CD8-positive, alpha-beta T cell (primary cell): ENCODE measurements at regions of chr16 and their contacts with region 1.

Region 1: DNA sequence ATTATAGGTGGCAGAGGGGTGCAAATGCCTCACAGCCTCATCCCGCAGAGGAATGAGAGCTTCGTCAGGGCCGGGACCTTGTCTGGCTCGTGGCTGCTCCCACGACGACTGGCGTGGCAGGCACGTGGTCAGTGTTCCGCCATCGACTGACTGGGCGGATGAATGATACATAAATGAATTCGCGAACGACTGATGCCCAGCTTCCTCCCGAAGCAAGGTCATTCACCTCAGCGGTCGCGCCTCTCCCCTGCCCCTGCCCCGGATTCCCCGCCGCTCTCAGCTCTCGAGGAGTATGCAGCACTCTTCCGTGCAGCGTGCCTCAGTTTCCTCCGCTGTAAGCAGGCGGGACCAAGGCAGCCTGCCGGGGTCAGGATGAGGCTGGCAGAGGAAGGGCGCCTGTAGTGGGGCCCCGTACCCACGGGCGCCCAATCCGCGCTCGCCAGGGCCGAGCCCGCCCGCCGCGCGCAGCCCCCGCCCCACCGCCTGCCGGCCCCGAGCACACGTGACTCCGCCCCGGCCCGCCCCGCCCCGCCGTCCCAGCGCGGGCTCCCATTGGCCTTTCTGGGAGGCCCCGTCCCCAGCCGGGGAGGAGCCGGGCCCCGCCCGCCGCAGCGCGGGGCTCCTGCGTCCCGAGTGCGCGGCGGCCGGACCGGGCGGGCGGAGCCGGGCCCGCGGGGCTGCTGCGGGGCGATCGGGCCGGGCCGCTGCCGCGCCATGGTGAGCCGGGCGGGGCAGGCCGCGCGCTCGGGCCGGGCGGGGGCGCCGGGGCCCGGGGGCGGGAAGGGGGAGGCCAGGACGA is at the start of gene SNN:
- DNase-seq: peak; percentile 69 to 91 (median 83)
- ATAC-seq: peak; percentile 81
- H3K4me3 ChIP-seq: peak within 1 kb of the TSS; percentile 51 to 59
- H3K4me3 Mint-ChIP-seq: peak within 1 kb of the TSS; percentile 85
- H3K27ac ChIP-seq: peak within 1 kb of the TSS; percentile 62 to 70
- H3K27ac Mint-ChIP-seq: peak within 1 kb of the TSS; percentile 97
- H3K4me1 ChIP-seq: peaks cover 86% of the 10 kb centered on the region
- H3K4me1 Mint-ChIP-seq: peaks cover 78% of the 10 kb centered on the region
- H3K27me3 ChIP-seq: no peaks in the 10 kb centered on the region
- H3K27me3 Mint-ChIP-seq: no peaks in the 10 kb centered on the region
- CTCF ChIP-seq: no peak
- total RNA-seq, gene SNN: 105 to 107 TPM

Region 2: GRCh38 chr16:11484691-11485258 is 183.2 kb before region 1 on chr16:
- CTCF ChIA-PET with region 1: no interaction called
- POLR2A ChIA-PET with region 1: no interaction called
- intact Hi-C with region 1: no loop called
- DNase-seq: no peak
- ATAC-seq: no peak
- H3K4me3 ChIP-seq: no peak overlapping the region
- H3K4me3 Mint-ChIP-seq: no peak overlapping the region
- H3K27ac ChIP-seq: no peak overlapping the region
- H3K27ac Mint-ChIP-seq: no peak overlapping the region
- H3K4me1 ChIP-seq: no peaks in the 10 kb centered on the region
- H3K4me1 Mint-ChIP-seq: no peaks in the 10 kb centered on the region
- H3K27me3 ChIP-seq: no peaks in the 10 kb centered on the region
- H3K27me3 Mint-ChIP-seq: no peaks in the 10 kb centered on the region
- CTCF ChIP-seq: no peak

Region 3: DNA sequence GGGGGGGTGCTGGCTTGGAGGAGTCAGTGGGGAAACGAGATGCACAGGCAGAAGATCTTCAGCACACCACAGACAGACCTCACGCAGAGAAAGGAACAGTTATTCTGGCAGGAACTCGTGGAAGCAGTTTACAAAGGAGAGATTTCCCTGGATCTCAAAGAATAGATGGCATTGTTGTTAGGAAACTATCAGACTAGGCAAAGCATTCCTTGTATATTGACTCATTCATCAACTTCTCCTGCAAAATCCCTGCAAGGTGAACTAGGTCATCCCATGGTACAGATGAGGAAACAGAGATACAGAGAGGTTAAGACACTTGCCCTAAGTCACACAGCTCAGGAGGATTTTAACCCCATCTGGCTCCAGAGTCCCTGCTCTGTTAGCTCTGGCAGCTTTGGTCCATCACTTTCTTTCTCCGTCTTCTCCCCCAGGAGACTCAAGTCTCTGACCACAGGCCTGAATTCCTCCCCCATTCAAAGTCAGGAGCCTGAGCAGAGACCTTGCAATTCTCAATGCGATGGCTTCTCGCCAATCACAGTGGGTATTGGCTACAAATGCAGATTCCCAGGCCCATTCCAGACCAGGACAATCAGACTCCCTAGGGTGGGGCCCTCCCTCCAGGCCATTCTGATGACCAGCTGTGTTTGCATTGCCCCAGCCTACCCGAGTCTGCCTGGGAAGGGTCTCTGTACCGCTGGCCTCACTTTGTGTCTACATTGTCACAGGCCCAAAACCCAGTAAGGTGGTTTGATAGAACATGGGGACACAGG is 137.7 kb before region 1 on chr16:
- CTCF ChIA-PET with region 1: interaction called, 25 read pairs
- POLR2A ChIA-PET with region 1: no interaction called
- intact Hi-C with region 1: no loop called
- DNase-seq: no peak
- ATAC-seq: no peak
- H3K4me3 ChIP-seq: no peak overlapping the region
- H3K4me3 Mint-ChIP-seq: no peak overlapping the region
- H3K27ac ChIP-seq: no peak overlapping the region
- H3K27ac Mint-ChIP-seq: no peak overlapping the region
- H3K4me1 ChIP-seq: no peaks in the 10 kb centered on the region
- H3K4me1 Mint-ChIP-seq: peaks cover 3% of the 10 kb centered on the region
- H3K27me3 ChIP-seq: no peaks in the 10 kb centered on the region
- H3K27me3 Mint-ChIP-seq: no peaks in the 10 kb centered on the region
- CTCF ChIP-seq: no peak

Region 4: GRCh38 chr16:11619327-11619851 is 48.6 kb before region 1 on chr16:
- CTCF ChIA-PET with region 1: no interaction called
- POLR2A ChIA-PET with region 1: interaction called, 5 read pairs
- intact Hi-C with region 1: loop called in 1 of 2 experiments (anchors 5 kb)
- DNase-seq: peak in 7 of 9 experiments; percentile 28 to 75 (median 48)
- ATAC-seq: peak; percentile 25
- H3K4me3 ChIP-seq: no peak overlapping the region
- H3K4me3 Mint-ChIP-seq: peak overlapping the region; percentile 58
- H3K27ac ChIP-seq: peak overlapping the region; percentile 40 to 86
- H3K27ac Mint-ChIP-seq: peak overlapping the region; percentile 98
- H3K4me1 ChIP-seq: peaks cover 77% of the 10 kb centered on the region
- H3K4me1 Mint-ChIP-seq: peaks cover 70% of the 10 kb centered on the region
- H3K27me3 ChIP-seq: no peaks in the 10 kb centered on the region
- H3K27me3 Mint-ChIP-seq: no peaks in the 10 kb centered on the region
- CTCF ChIP-seq: no peak

Region 5: DNA sequence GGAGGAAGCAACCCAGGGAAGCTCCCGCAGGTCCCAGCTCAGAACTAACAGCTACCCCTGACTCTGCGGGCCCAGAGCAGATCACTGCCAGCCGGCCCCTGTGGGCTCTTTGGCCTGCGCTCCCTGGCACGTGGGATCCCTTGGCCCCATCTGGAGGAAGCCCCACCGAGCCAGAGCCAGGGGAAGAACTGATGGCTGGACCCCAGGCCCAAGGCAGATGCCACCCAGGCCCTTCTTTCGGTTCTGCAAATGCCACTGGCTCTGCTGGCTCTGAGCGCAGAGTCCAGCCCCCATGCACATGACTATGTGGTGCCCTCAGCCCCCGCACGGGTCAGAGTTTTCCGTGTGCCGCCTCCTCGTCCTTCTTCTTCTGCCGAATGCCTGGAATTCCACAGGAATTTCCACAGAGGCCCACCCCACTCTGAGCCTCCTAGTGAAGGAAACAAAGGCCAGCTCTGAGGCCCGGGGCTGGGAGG is 35.5 kb before region 1 on chr16:
- CTCF ChIA-PET with region 1: no interaction called
- POLR2A ChIA-PET with region 1: no interaction called
- intact Hi-C with region 1: no loop called
- DNase-seq: no peak
- ATAC-seq: no peak
- H3K4me3 ChIP-seq: no peak overlapping the region
- H3K4me3 Mint-ChIP-seq: no peak overlapping the region
- H3K27ac ChIP-seq: no peak overlapping the region
- H3K27ac Mint-ChIP-seq: no peak overlapping the region
- H3K4me1 ChIP-seq: peaks cover 26% of the 10 kb centered on the region
- H3K4me1 Mint-ChIP-seq: peaks cover 37% of the 10 kb centered on the region
- H3K27me3 ChIP-seq: no peaks in the 10 kb centered on the region
- H3K27me3 Mint-ChIP-seq: no peaks in the 10 kb centered on the region
- CTCF ChIP-seq: no peak

Region 6: GRCh38 chr16:11868412-11868980 is 200.5 kb after region 1 on chr16:
- CTCF ChIA-PET with region 1: no interaction called
- POLR2A ChIA-PET with region 1: no interaction called
- intact Hi-C with region 1: no loop called
- DNase-seq: no peak
- ATAC-seq: no peak
- H3K4me3 ChIP-seq: no peak overlapping the region
- H3K4me3 Mint-ChIP-seq: no peak overlapping the region
- H3K27ac ChIP-seq: no peak overlapping the region
- H3K27ac Mint-ChIP-seq: peak overlapping the region; percentile 32
- H3K4me1 ChIP-seq: no peaks in the 10 kb centered on the region
- H3K4me1 Mint-ChIP-seq: peaks cover 16% of the 10 kb centered on the region
- H3K27me3 ChIP-seq: no peaks in the 10 kb centered on the region
- H3K27me3 Mint-ChIP-seq: no peaks in the 10 kb centered on the region
- CTCF ChIP-seq: no peak

Region 7: GRCh38 chr16:11915644-11916523 is 247.9 kb after region 1 on chr16 and contains the start of gene GSPT1:
- CTCF ChIA-PET with region 1: no interaction called
- POLR2A ChIA-PET with region 1: no interaction called
- intact Hi-C with region 1: loop called in 1 of 2 experiments (anchors 5 kb)
- DNase-seq: peak; percentile 98 to 100 (median 99)
- ATAC-seq: peak; percentile 89
- H3K4me3 ChIP-seq: peak within 1 kb of the TSS; percentile 52 to 68
- H3K4me3 Mint-ChIP-seq: peak within 1 kb of the TSS; percentile 94
- H3K27ac ChIP-seq: peak within 1 kb of the TSS; percentile 68 to 75
- H3K27ac Mint-ChIP-seq: peak within 1 kb of the TSS; percentile 98
- H3K4me1 ChIP-seq: peaks cover 24% of the 10 kb centered on the region
- H3K4me1 Mint-ChIP-seq: peaks cover 29% of the 10 kb centered on the region
- H3K27me3 ChIP-seq: no peaks in the 10 kb centered on the region
- H3K27me3 Mint-ChIP-seq: no peaks in the 10 kb centered on the region
- CTCF ChIP-seq: no peak
- total RNA-seq, gene GSPT1: 296 to 297 TPM

Region 8: GRCh38 chr16:12043953-12044352 is 375.9 kb after region 1 on chr16:
- CTCF ChIA-PET with region 1: no interaction called
- POLR2A ChIA-PET with region 1: no interaction called
- intact Hi-C with region 1: no loop called
- DNase-seq: no peak
- ATAC-seq: no peak
- H3K4me3 ChIP-seq: no peak overlapping the region
- H3K4me3 Mint-ChIP-seq: no peak overlapping the region
- H3K27ac ChIP-seq: no peak overlapping the region
- H3K27ac Mint-ChIP-seq: no peak overlapping the region
- H3K4me1 ChIP-seq: no peaks in the 10 kb centered on the region
- H3K4me1 Mint-ChIP-seq: no peaks in the 10 kb centered on the region
- H3K27me3 ChIP-seq: no peaks in the 10 kb centered on the region
- H3K27me3 Mint-ChIP-seq: no peaks in the 10 kb centered on the region
- CTCF ChIP-seq: no peak